ENCODE measurements at regions of chr17 and their contacts with region 1.

Region 1: GRCh38 chr17:35977509-35977908 is 3.8 kb downstream of the CCL16 start:
- DNase-seq: no peak

Region 2: DNA sequence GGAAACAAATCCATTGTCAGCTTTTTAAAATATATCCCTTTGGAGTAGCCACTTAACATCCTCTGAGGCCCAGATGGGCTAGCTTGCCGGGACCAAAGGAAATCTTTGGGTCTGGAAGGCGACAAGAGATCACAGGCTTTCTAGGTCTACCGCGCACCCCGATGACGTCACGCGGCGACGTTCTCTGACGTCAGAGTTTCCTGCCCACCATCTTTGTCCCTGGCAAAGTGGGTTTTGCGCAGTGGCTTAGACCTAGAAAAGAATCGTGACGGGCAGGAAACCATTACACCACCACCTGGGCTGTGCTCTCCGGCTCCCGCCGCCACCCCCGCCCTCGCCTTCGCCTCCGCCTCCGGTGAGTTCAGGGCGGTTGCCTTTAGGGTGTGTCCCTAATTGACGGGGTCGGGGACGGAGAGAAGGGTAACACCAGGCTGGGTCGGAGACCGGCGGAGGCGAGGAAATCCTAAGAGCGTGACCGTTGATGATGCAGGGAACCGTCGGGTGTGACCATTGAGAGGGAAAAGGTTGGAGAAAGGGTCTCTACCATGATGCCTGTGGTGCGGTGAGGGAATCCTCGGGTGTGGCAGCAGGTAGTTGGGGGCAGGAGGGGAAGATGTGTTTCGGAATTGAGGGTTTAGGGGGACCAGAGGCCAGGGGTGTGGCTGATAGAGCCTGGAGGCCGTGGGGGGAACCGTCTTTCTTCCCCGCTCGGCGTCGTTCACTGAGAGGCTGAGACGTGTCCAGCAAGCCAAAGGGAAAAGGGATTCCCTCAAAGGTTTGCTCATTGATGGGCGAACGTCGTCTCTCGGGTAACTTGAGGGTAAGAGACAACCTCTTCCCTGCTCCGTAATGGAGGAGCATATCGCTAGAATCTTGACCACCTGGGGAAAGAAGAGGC is 390.2 kb before region 1 on chr17 and contains the start of gene AP2B1:
- intact Hi-C with region 1: no loop called
- DNase-seq: peak; percentile 96
- total RNA-seq, gene AP2B1: 137 TPM

Region 3: DNA sequence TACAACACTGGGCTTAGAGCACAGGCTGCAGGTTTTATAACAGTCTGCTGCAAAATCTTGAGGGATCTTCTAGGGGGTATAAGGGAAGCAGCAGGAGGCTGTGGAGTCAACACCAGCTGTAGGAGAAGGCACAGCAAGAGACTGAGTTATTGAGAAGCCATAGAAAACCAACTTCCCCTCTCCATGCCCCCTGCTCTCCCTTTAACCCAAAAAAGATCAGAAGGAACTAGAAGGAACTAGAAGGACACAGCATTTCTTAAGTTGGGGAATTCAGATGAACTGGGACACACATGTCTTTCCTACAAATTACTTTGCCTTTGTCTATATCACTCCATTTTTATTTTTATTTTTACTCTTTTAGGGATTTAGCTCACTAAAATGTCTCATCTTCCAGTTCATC is 80.4 kb after region 1 on chr17:
- intact Hi-C with region 1: no loop called
- DNase-seq: no peak

Region 4: DNA sequence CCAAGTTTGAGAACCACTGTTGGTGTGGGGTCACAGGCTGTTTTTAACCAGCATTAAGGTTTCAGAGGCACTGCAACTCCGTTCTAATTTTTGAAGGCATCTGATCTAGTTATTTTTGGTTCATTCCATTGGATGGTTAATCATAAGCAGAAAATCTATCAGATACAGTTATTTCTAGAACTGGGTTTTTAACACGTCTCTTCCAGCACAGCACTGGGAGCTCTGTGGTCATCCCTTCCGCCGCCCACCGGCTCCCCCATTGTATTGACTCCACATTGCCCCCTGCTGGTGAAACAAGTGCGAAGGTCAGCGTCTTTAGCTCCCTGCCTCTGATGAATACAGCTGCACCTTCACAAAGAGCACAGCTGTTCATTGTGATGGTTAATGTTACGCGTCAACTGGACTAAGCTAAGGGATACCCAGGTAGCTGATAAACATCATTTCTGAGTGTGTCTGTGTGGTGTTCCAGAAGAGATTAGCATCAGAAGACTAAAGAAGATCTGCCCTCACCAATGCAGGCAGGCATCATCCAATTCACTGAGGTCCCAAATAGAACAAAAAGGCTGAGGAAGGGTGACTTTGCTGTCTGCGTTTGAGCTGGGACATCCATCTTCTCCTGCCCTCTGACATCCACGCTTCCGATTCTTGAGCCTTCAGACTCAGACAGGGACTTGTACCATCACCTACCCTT is 95.1 kb after region 1 on chr17:
- intact Hi-C with region 1: loop called (anchors 5 kb)
- DNase-seq: no peak